ENCODE measurements at regions of chr17 and their contacts with region 1.

Region 1: GRCh38 chr17:40909351-40909750 is 24.3 kb upstream of the KRT20 start:
- DNase-seq: peak in 4 of 5 donors; percentile 64 to 77 (median 68)
- ATAC-seq: peak; percentile 73 to 97 (median 90)
- H3K4me3 ChIP-seq: no peak overlapping the region
- H3K27ac ChIP-seq: no peak overlapping the region
- H3K4me1 ChIP-seq: peaks cover 0 to 14% (median 0%) of the 10 kb centered on the region in 12 donors
- H3K27me3 ChIP-seq: peaks cover 0 to 23% (median 7%) of the 10 kb centered on the region in 9 donors
- CTCF ChIP-seq: peak; percentile 50 to 80 (median 70)
- POLR2A ChIP-seq: no peak

Region 2: GRCh38 chr17:40803617-40804082 is 105.7 kb before region 1 on chr17:
- intact Hi-C with region 1: loop called in 3 of 10 experiments (anchors 10 kb)
- DNase-seq: peak; percentile 65 to 78 (median 70)
- ATAC-seq: peak; percentile 61 to 90 (median 86)
- H3K4me3 ChIP-seq: no peak overlapping the region
- H3K27ac ChIP-seq: no peak overlapping the region
- H3K4me1 ChIP-seq: peaks cover 0 to 6% (median 1%) of the 10 kb centered on the region in 12 donors
- H3K27me3 ChIP-seq: peaks cover 0 to 37% (median 8%) of the 10 kb centered on the region in 9 donors
- CTCF ChIP-seq: peak; percentile 72 to 92 (median 83)
- POLR2A ChIP-seq: no peak

Region 3: GRCh38 chr17:40854159-40854814 is 55.1 kb before region 1 on chr17:
- intact Hi-C with region 1: no loop called
- DNase-seq: no peak
- ATAC-seq: no peak
- H3K4me3 ChIP-seq: no peak overlapping the region
- H3K27ac ChIP-seq: no peak overlapping the region
- H3K4me1 ChIP-seq: peaks cover 0 to 11% (median 2%) of the 10 kb centered on the region in 12 donors
- H3K27me3 ChIP-seq: peaks cover 0 to 10% (median 0%) of the 10 kb centered on the region in 9 donors
- CTCF ChIP-seq: no peak
- POLR2A ChIP-seq: no peak

Region 4: DNA sequence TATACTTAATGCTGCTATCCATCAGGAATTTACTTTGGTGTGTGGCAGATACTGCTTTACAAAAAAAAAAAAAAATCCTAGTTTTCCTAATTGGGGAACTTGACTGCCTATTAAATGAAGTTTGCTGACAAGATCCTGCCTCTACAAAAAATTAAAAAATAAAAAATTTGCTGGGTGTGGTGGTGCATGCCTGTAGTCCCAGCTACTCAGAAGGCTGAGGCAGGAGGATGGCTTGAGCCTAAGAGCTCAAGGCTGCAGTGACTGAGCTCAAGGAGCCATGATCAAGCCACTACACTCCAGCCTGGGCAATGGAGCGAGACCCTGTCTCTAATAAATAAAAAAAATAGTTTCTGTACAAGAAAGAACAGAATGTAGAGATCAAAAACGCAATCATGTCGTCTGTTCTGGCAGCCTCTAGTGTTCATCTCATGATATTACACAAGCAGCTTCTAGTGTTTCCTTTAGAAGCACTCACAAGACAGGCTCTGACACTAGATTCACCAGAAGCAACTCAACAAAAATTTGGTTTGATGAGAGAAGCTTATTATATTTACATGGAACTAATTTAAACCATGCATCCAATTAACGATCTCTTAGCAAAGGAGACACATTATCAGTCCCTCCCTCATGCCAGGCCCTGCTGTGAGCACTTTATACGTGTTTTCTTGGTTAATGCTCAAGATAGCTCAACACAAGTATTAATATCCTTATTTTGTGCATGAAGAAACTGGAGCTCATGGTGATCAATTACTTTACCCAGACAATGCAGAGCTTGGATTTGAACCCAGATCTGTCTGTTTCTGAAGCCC is 412.9 kb after region 1 on chr17:
- intact Hi-C with region 1: loop called in 7 of 10 experiments (anchors 2 to 10 kb)
- DNase-seq: no peak
- ATAC-seq: peak in 1 of 4 donors; percentile 41
- H3K4me3 ChIP-seq: no peak overlapping the region
- H3K27ac ChIP-seq: no peak overlapping the region
- H3K4me1 ChIP-seq: no peaks in the 10 kb centered on the region
- H3K27me3 ChIP-seq: no peaks in the 10 kb centered on the region
- CTCF ChIP-seq: peak; percentile 35 to 73 (median 59)
- POLR2A ChIP-seq: no peak

Region 5: DNA sequence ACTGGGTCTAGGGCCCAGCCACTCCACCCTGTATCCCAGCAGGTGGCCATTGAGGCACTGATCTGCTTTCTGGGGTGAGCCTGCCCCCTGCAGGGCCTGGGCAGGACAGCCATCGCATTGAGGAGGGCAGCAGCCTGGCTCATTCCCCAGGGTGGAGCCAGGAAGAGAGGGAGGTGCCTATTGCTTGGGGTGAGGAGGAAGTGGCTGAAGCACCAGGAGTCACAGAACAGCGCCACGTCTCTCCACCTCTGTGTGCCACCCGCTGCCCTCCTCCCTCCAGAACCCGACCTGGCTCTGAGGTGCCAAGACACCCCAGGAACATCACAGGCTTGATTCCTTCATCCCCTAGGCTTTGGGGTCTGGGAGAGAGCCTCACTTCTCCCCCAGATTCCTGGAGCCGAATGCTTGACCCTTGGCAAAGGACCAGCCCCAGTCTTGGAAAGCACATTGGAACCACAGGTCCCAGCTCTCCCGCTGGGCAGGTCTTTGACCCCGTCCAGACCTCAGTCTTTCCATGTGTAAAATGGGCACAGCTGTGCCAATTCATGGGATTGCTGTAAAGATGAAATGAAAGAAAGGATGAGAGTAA is 587.6 kb after region 1 on chr17:
- intact Hi-C with region 1: loop called in 4 of 10 experiments (anchors 5 to 10 kb)
- DNase-seq: peak; percentile 52 to 79 (median 68)
- ATAC-seq: peak; percentile 69 to 87 (median 86)
- H3K4me3 ChIP-seq: no peak overlapping the region
- H3K27ac ChIP-seq: peak overlapping the region in 1 of 12 donors; percentile 71
- H3K4me1 ChIP-seq: peaks cover 0 to 41% (median 0%) of the 10 kb centered on the region in 12 donors
- H3K27me3 ChIP-seq: peaks cover 0 to 7% (median 0%) of the 10 kb centered on the region in 9 donors
- CTCF ChIP-seq: peak; percentile 19 to 66 (median 52)
- POLR2A ChIP-seq: no peak

Region 6: GRCh38 chr17:41648411-41649195 is 739.3 kb after region 1 on chr17:
- intact Hi-C with region 1: loop called in 8 of 10 experiments (anchors 1 to 10 kb)
- DNase-seq: peak; percentile 83 to 91 (median 85)
- ATAC-seq: peak; percentile 90 to 96 (median 92)
- H3K4me3 ChIP-seq: peak overlapping the region in 11 of 12 donors; percentile 2 to 57 (median 45)
- H3K27ac ChIP-seq: peak overlapping the region in 2 of 12 donors; percentile 38 to 41
- H3K4me1 ChIP-seq: peaks cover 0 to 29% (median 8%) of the 10 kb centered on the region in 12 donors
- H3K27me3 ChIP-seq: no peaks in the 10 kb centered on the region
- CTCF ChIP-seq: peak; percentile 84 to 98 (median 92)
- POLR2A ChIP-seq: no peak

Measured in heart left ventricle (tissue), 16 donors.